ENCODE measurements at regions of chr10 and their contacts with region 1.

Region 1: GRCh38 chr10:60409202-60409601 is 19.5 kb upstream of the ANK3 start:
- DNase-seq: peak; percentile 75
- ATAC-seq: peak; percentile 80
- H3K4me3 ChIP-seq: no peak overlapping the region
- H3K27ac ChIP-seq: peak overlapping the region; percentile 72; the same call in 1 of the 2 replicates
- H3K4me1 ChIP-seq: peaks cover 16% of the 10 kb centered on the region
- H3K27me3 ChIP-seq: no peaks in the 10 kb centered on the region
- CTCF ChIP-seq: no peak
- POLR2A ChIP-seq: no peak
- RAD21 ChIP-seq: no peak

Region 2: GRCh38 chr10:59847326-59847725 is 561.9 kb before region 1 on chr10:
- CTCF ChIA-PET with region 1: no interaction called
- POLR2A ChIA-PET with region 1: no interaction called
- dilution Hi-C with region 1: no loop called
- in situ Hi-C with region 1: no loop called
- intact Hi-C with region 1: no loop called
- DNase-seq: no peak
- ATAC-seq: no peak
- H3K4me3 ChIP-seq: no peak overlapping the region
- H3K27ac ChIP-seq: no peak overlapping the region
- H3K4me1 ChIP-seq: no peaks in the 10 kb centered on the region
- H3K27me3 ChIP-seq: no peaks in the 10 kb centered on the region
- CTCF ChIP-seq: no peak
- POLR2A ChIP-seq: no peak
- RAD21 ChIP-seq: no peak

Region 3: GRCh38 chr10:60384708-60385398 is 24.3 kb before region 1 on chr10:
- CTCF ChIA-PET with region 1: no interaction called
- POLR2A ChIA-PET with region 1: no interaction called
- dilution Hi-C with region 1: no loop called
- in situ Hi-C with region 1: no loop called
- intact Hi-C with region 1: loop called (anchors 2 kb)
- DNase-seq: peak; percentile 98
- ATAC-seq: peak; percentile 98
- H3K4me3 ChIP-seq: no peak overlapping the region
- H3K27ac ChIP-seq: peak overlapping the region; percentile 49
- H3K4me1 ChIP-seq: peaks cover 11% of the 10 kb centered on the region
- H3K27me3 ChIP-seq: no peaks in the 10 kb centered on the region
- CTCF ChIP-seq: no peak
- POLR2A ChIP-seq: no peak
- RAD21 ChIP-seq: no peak

Region 4: GRCh38 chr10:60444494-60445064 is 35.4 kb after region 1 on chr10:
- CTCF ChIA-PET with region 1: no interaction called
- POLR2A ChIA-PET with region 1: no interaction called
- dilution Hi-C with region 1: no loop called
- in situ Hi-C with region 1: no loop called
- intact Hi-C with region 1: no loop called
- DNase-seq: peak; percentile 63
- ATAC-seq: peak; percentile 65
- H3K4me3 ChIP-seq: no peak overlapping the region
- H3K27ac ChIP-seq: no peak overlapping the region
- H3K4me1 ChIP-seq: peaks cover 3% of the 10 kb centered on the region; the same call in 1 of the 2 replicates
- H3K27me3 ChIP-seq: no peaks in the 10 kb centered on the region; the same call in 1 of the 2 replicates
- CTCF ChIP-seq: peak; percentile 72
- POLR2A ChIP-seq: no peak
- RAD21 ChIP-seq: peak; percentile 70

Region 5: GRCh38 chr10:60537697-60538096 is 128.5 kb after region 1 on chr10:
- CTCF ChIA-PET with region 1: no interaction called
- POLR2A ChIA-PET with region 1: no interaction called
- dilution Hi-C with region 1: no loop called
- in situ Hi-C with region 1: no loop called
- intact Hi-C with region 1: no loop called
- DNase-seq: peak; percentile 1
- ATAC-seq: no peak
- H3K4me3 ChIP-seq: no peak overlapping the region
- H3K27ac ChIP-seq: no peak overlapping the region
- H3K4me1 ChIP-seq: no peaks in the 10 kb centered on the region
- H3K27me3 ChIP-seq: peaks cover under 1% of the 10 kb centered on the region
- CTCF ChIP-seq: no peak
- POLR2A ChIP-seq: no peak
- RAD21 ChIP-seq: no peak

Measured in IMR-90 (cell line).